ENCODE measurements at regions of chr17 and their contacts with region 1.

Region 1: GRCh38 chr17:67221062-67221998 is 23.7 kb downstream of the HELZ start:
- DNase-seq: peak; percentile 37
- H3K4me3 Mint-ChIP-seq: no peak overlapping the region
- H3K27ac Mint-ChIP-seq: no peak overlapping the region
- H3K4me1 Mint-ChIP-seq: peaks cover 8% of the 10 kb centered on the region
- H3K27me3 Mint-ChIP-seq: no peaks in the 10 kb centered on the region
- CTCF ChIP-seq: peak; percentile 48

Region 2: GRCh38 chr17:67293251-67294203 is 72.2 kb after region 1 on chr17:
- CTCF ChIA-PET with region 1: interaction called, 10 read pairs
- intact Hi-C with region 1: loop called (anchors 1 kb)
- DNase-seq: peak; percentile 70
- H3K4me3 Mint-ChIP-seq: no peak overlapping the region
- H3K27ac Mint-ChIP-seq: no peak overlapping the region
- H3K4me1 Mint-ChIP-seq: no peaks in the 10 kb centered on the region
- H3K27me3 Mint-ChIP-seq: no peaks in the 10 kb centered on the region
- CTCF ChIP-seq: peak; percentile 84

Region 3: DNA sequence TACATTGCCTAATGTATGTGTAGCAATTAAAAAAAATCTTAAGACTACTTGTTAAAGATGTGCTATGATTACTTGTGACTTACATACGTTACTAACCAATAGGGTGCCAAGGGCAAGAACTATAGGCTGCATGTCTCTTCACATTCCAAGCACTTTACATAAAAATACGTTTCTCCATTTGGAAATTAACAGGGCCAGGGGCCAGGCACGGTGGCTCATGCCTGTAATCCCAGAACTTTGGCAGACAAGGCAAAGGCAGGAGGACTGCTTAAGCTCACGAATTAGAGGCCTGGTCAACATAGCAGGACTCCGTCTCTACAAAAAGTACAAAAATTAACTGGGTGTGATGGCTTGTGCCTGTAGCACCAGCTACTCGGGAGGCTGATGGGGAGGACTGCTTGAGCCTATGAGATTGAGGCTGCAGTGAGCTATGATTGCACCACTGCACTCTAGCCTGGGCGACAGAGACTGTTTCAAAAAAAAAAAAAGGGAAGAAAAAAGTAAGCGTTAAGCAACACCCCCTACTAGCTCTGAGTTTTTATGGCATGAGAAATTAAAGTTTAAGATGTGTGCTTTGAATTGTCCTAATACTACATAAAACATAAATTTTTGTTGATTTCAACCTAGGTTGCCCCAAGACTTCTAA is 132.7 kb after region 1 on chr17:
- CTCF ChIA-PET with region 1: no interaction called
- intact Hi-C with region 1: loop called (anchors 5 kb)
- DNase-seq: no peak
- H3K4me3 Mint-ChIP-seq: no peak overlapping the region
- H3K27ac Mint-ChIP-seq: no peak overlapping the region
- H3K4me1 Mint-ChIP-seq: no peaks in the 10 kb centered on the region
- H3K27me3 Mint-ChIP-seq: no peaks in the 10 kb centered on the region
- CTCF ChIP-seq: no peak